ENCODE measurements at regions of chr9 and their contacts with region 1.

Region 1: GRCh38 chr9:123349691-123350480 is 6.1 kb upstream of the CRB2 start:
- H3K4me3 ChIP-seq: peak overlapping the region; percentile 10; the same call in 1 of the 2 replicates
- H3K27ac ChIP-seq: no peak overlapping the region
- H3K4me1 ChIP-seq: no peaks in the 10 kb centered on the region
- CTCF ChIP-seq: peak; percentile 91

Region 2: DNA sequence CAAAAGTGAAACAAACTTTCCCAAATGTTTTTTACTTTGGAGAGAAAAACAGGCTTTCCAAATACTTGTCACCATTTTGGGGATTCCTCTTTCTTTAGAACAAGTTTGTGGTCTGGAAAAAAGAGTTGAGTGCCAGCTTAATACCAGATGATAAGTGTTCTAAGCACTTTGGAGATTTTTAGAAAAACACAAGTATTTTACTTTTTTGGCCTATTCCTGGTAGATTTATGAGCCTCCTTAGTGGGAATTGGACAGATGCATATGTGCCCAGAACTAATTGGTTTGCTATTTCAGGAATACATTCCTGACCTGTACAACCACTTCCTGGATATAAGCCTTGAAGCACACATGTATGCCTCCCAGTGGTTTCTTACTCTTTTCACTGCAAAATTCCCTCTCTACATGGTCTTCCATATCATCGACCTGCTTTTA is 275.9 kb before region 1 on chr9:
- CTCF ChIA-PET with region 1: interaction called, 14 read pairs
- POLR2A ChIA-PET with region 1: no interaction called
- H3K4me3 ChIP-seq: no peak overlapping the region
- H3K27ac ChIP-seq: no peak overlapping the region
- H3K4me1 ChIP-seq: no peaks in the 10 kb centered on the region
- CTCF ChIP-seq: no peak

Region 3: DNA sequence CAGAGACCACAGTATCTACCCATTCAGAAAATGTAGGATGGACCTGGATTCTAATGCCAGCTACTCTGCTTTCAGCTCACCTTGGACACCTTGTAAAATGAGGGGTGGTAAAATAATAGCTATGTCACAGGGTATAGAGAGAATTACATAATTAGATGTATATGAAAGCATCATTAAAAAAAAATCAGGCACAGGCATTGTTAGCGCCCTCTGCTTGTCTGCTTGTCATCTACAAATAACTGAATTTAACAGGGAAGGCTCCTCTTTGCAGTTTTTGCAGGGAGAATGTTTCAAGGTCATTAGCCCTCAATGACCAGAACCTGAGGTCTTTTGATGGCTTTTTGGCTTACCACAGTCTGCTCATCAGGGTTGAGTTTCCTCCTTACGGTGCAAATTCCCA is 258.4 kb before region 1 on chr9:
- CTCF ChIA-PET with region 1: interaction called, 21 read pairs
- POLR2A ChIA-PET with region 1: no interaction called
- H3K4me3 ChIP-seq: no peak overlapping the region
- H3K27ac ChIP-seq: no peak overlapping the region
- H3K4me1 ChIP-seq: no peaks in the 10 kb centered on the region
- CTCF ChIP-seq: no peak

Region 4: DNA sequence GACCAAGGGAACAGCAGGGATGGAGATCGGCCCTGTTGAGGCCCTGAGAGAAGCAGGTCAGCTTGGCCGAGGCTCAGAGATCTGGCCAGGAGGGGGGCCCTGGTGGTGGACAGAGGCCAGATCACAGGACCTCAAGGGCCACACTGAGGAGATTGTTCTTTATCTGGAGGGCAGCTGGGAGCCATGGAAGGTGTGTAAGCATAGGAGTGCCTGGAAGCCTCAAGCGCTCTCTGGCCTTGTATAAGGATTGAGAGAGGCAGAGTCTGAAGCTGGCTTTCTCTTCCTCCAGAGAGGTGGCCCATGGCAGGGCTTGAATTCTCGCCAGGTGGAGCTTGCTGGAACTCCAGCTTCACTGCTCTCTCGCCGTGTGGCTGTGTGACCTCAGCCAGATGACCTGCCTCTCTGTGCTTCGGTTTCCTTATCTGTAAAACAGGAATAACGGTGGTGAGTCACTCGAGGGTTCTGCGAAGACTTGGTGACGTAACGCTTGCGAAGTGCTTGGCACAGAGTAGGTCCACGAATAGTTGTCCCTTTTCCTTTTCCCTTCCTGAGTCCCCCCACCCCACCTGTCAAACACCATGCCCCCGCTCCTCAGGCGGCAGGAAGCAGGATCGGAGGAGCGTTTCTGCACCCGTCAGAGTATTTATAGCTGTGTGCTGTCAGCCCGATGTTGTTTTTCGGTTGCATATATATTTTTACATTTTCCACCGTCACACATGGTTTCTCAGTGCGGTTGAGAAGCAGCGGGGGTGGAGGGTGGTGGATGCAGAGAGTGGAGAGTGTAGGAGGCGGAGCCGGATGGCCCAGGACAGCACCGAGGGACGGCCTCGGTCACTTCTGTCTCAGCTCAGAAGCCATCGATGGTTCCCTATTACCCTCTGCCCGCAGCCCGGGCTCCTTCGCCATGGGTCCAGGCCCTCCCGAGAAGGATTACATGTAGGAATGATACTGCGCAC is 10.9 kb before region 1 on chr9:
- CTCF ChIA-PET with region 1: interaction called, 12 read pairs
- POLR2A ChIA-PET with region 1: interaction called, 3 read pairs
- H3K4me3 ChIP-seq: no peak overlapping the region
- H3K27ac ChIP-seq: no peak overlapping the region
- H3K4me1 ChIP-seq: no peaks in the 10 kb centered on the region
- CTCF ChIP-seq: no peak

Region 5: GRCh38 chr9:123368023-123368422 is 18.1 kb after region 1 on chr9:
- CTCF ChIA-PET with region 1: interaction called, 11 read pairs
- POLR2A ChIA-PET with region 1: no interaction called
- H3K4me3 ChIP-seq: no peak overlapping the region
- H3K27ac ChIP-seq: no peak overlapping the region
- H3K4me1 ChIP-seq: no peaks in the 10 kb centered on the region
- CTCF ChIP-seq: no peak

Region 6: DNA sequence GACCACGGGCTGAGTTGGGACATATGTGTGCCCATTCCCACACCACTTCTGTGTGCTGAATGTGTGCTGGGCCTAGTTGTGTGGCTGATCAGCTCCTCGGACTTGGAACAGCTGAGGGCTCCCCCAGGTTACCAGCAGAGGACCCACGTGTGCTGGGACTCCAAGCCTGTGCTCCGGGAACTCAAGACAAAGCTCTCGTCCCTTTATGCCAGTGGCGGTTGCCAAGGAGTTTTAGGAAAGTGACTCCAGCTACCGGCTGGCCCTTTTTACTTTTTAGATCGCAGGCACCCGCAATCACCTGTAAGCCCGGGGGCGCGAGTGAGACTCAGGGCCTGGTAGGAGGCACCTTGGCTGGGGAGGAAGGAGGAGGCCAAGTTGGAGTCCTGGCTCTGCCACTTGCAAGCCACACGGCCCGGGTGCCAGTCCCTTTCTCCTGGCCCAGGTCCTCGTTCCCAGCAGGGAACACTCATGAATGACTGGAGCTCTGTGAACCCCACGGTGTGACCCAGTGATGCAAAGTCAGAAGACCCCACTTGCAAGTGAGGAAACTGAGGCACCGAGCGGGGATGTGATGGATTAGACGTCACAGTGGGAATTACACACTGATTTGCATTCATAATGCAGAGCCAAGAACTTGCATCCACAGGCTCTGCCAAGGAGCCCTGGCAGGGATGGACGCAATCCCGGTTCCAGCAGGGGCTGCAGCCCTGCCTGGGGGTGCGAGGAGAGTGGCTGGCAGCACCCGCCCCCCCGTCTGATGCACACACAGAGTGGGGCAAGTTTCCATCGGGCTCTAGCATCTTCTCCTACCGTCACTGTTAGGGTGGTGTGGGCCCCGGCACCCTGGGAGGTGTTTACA is 33.0 kb after region 1 on chr9:
- CTCF ChIA-PET with region 1: interaction called, 106 read pairs
- POLR2A ChIA-PET with region 1: interaction called, 3 read pairs
- H3K4me3 ChIP-seq: no peak overlapping the region
- H3K27ac ChIP-seq: no peak overlapping the region
- H3K4me1 ChIP-seq: no peaks in the 10 kb centered on the region
- CTCF ChIP-seq: no peak

Region 7: GRCh38 chr9:123472862-123473614 is 123.2 kb after region 1 on chr9:
- CTCF ChIA-PET with region 1: no interaction called
- POLR2A ChIA-PET with region 1: no interaction called
- H3K4me3 ChIP-seq: no peak overlapping the region
- H3K27ac ChIP-seq: no peak overlapping the region
- H3K4me1 ChIP-seq: no peaks in the 10 kb centered on the region
- CTCF ChIP-seq: no peak